Posterior cingulate gyrus (tissue), 11 donors: ENCODE measurements at regions of chr12 and their contacts with region 1.

Region 1: DNA sequence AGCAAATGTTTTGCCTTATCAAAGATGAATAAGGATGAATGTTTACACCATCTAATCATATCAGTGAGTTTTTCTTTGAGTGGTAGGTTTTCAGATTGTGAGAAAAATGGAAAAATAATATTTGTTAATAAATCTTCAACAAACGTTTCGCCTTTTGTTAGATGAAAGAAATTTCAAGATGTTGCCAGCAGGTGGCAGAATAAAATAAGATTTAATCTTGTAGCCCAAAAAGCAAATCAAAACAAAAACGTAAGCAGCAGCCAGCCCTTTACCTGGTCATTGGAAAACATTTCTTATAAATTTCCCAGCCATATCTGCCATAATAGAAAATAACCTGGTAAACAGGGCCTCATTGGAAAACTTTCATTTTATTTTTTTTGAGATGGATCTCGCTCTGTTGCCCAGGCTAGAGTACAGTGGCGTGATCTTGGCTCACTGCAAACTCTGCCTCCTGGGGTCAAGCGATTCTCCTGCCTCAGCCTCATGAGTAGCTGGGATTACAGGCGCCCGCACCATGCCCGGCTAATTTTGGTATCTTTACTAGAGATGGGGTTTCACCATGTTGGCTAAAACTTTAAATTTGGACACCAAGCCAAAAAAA is 15.4 kb upstream of the TMEM120B start:
- DNase-seq: peak in 2 of 10 donors; percentile 38 to 39

Region 2: GRCh38 chr12:121773011-121773777 is 76.0 kb after region 1 on chr12:
- intact Hi-C with region 1: loop called (anchors 1 kb)
- DNase-seq: peak in 8 of 10 donors; percentile 52 to 94 (median 70)

Region 3: DNA sequence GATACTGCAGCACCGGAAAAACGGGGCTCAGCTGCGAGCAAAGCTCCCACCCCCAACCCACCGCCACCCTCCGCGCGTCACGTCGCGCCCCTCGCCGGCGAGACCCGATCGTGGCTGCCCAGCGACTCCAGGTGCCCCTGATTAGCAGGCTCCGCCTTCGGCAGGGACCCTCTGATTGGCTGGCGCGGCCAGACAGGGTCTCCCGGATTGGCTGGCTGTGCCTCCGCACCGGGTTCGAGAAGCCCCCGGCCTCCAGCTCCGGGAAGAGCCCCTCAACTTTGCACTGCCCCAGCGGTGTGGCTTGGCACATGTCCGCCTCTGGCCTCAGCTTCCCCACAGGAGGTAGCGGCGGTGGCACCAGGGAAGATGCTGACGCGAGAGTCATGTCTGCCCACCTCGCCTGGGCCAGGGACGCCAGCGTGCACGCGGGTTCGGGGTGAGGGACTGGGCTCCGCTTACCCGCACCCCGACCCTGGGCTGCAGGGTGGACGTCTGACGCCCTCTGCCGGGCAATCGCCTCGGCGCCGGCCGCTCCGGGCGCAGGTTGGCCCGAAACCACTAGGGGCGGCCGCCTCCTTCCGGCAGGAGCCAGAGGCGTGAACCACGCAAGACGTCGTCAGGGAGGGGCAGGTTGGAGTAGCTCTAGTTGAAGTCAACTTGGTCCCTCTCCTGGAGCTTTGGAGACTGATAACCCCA is 96.8 kb after region 1 on chr12:
- intact Hi-C with region 1: loop called (anchors 1 kb)
- DNase-seq: peak; percentile 80 to 98 (median 86)

Region 4: DNA sequence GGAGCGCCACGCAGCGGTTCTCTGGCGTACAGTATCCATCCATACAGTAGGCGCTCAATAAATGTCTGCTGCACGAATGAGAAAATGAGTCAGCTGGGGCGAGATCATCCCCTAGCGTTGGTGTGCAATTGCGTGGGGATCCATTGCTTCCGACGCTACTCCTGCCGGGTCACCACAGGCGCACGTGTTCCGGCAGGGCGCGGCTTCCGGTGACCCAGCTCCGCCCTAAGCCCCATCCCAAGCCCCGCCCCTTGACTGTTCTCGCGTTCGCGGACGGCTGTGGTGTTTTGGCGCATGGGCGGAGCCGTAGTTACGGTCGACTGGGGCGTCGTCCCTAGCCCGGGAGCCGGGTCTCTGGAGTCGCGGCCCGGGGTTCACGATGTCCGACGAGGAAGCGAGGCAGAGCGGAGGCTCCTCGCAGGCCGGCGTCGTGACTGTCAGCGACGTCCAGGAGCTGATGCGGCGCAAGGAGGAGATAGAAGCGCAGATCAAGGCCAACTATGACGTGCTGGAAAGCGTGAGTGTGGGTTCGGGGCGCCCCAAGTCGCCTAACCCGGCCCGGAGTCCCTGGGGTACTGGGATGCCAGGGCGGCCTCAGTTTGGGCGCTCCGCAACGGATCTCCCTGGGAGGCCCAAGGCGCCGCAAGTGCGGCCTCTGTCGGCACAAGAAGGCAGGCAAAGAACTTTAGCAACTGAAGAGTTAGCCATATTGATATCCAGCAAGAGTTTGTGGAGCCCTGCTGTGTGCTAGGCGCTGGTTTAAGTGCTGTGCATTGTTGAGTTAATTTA is 191.5 kb after region 1 on chr12 and contains the start of gene PSMD9:
- intact Hi-C with region 1: loop called (anchors 5 kb)
- DNase-seq: peak; percentile 96 to 100 (median 98)